ENCODE measurements at regions of chr6 and their contacts with region 1.

Region 1: GRCh38 chr6:30616811-30617564 is at the start of gene PPP1R10:
- DNase-seq: peak; percentile 100
- H3K4me3 Mint-ChIP-seq: peak within 1 kb of the TSS; percentile 98
- H3K27ac Mint-ChIP-seq: peak within 1 kb of the TSS; percentile 100
- H3K4me1 Mint-ChIP-seq: peaks cover 45% of the 10 kb centered on the region
- H3K27me3 Mint-ChIP-seq: peaks cover 2% of the 10 kb centered on the region
- total RNA-seq, gene PPP1R10: 99.1 to 117 TPM

Region 2: GRCh38 chr6:30489081-30490025 is 127.6 kb before region 1 on chr6 and contains the start of gene HLA-E:
- CTCF ChIA-PET with region 1: no interaction called
- POLR2A ChIA-PET with region 1: no interaction called
- DNase-seq: peak; percentile 97
- H3K4me3 Mint-ChIP-seq: peak within 1 kb of the TSS; percentile 100
- H3K27ac Mint-ChIP-seq: peak within 1 kb of the TSS; percentile 96
- H3K4me1 Mint-ChIP-seq: peaks cover 51% of the 10 kb centered on the region
- H3K27me3 Mint-ChIP-seq: no peaks in the 10 kb centered on the region
- total RNA-seq, gene HLA-E: 706 to 753 TPM

Region 3: DNA sequence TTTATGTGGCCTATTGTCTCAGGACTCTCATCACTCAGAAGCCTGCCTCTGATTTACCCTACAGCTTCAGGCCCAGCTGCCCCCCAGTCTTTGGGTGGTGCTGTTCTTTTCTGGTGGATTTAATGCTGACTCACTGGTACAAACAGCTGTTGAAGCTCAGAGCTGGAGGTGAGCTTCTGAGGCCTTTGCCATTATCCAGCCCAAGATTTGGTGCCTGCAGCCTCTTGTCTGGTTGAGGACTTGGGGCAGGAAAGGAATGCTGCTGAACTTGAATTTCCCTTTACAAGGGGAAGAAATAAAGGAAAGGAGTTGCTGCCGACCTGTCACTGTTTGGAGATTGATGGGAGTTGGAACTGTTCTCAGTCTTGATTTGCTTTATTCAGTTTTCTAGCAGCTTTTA is 26.0 kb before region 1 on chr6:
- CTCF ChIA-PET with region 1: interaction called, 15 read pairs
- POLR2A ChIA-PET with region 1: no interaction called
- DNase-seq: no peak
- H3K4me3 Mint-ChIP-seq: no peak overlapping the region
- H3K27ac Mint-ChIP-seq: no peak overlapping the region
- H3K4me1 Mint-ChIP-seq: peaks cover 3% of the 10 kb centered on the region
- H3K27me3 Mint-ChIP-seq: no peaks in the 10 kb centered on the region

Region 4: GRCh38 chr6:31158140-31158862 is 541.3 kb after region 1 on chr6 and contains the start of gene TCF19:
- CTCF ChIA-PET with region 1: no interaction called
- POLR2A ChIA-PET with region 1: interaction called, 10 read pairs
- DNase-seq: peak; percentile 99
- H3K4me3 Mint-ChIP-seq: peak within 1 kb of the TSS; percentile 87
- H3K27ac Mint-ChIP-seq: peak within 1 kb of the TSS; percentile 84
- H3K4me1 Mint-ChIP-seq: peaks cover 46% of the 10 kb centered on the region
- H3K27me3 Mint-ChIP-seq: no peaks in the 10 kb centered on the region
- total RNA-seq, gene TCF19: 86.3 to 86.7 TPM